Posterior vena cava (tissue), 2 donors: ENCODE measurements at regions of chr1 and their contacts with region 1.

Region 1: DNA sequence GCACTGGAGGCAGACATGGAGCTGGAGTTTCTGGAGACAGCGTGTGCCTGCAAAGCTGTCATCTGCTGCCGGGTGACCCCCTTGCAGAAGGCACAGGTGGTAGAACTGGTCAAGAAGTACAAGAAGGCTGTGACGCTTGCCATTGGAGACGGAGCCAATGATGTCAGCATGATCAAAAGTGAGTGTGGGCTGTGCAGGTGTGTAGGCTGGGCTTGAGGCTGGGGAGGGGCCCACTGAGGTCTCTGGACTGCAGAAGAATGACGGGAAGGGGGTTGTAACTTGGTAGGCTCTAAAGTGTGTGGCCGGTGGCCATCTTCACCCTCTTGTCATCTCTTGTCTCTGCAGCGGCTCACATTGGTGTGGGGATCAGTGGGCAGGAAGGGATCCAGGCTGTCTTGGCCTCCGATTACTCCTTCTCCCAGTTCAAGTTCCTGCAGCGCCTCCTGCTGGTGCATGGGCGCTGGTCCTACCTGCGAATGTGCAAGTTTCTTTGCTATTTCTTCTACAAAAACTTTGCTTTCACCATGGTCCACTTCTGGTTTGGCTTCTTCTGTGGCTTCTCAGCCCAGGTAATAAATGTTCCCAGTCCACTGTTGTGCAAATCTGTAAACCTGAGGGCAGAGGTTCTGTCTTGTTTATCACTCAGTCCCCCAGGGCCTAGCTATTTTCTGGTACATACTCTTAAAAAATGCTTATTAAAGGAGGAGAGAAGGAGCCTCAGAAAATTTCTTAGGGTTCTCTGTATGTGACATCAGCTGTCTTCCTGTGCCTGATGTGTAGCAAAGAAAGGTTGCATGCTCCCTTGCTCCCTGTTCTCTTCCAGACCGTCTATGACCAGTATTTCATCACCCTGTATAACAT is 19.9 kb downstream of the ATP8B2 start:
- DNase-seq: peak; percentile 86

Region 2: GRCh38 chr1:154265586-154265985 is 79.6 kb before region 1 on chr1:
- intact Hi-C with region 1: loop called in 1 of 2 experiments (anchors 5 kb)
- DNase-seq: no peak

Region 3: DNA sequence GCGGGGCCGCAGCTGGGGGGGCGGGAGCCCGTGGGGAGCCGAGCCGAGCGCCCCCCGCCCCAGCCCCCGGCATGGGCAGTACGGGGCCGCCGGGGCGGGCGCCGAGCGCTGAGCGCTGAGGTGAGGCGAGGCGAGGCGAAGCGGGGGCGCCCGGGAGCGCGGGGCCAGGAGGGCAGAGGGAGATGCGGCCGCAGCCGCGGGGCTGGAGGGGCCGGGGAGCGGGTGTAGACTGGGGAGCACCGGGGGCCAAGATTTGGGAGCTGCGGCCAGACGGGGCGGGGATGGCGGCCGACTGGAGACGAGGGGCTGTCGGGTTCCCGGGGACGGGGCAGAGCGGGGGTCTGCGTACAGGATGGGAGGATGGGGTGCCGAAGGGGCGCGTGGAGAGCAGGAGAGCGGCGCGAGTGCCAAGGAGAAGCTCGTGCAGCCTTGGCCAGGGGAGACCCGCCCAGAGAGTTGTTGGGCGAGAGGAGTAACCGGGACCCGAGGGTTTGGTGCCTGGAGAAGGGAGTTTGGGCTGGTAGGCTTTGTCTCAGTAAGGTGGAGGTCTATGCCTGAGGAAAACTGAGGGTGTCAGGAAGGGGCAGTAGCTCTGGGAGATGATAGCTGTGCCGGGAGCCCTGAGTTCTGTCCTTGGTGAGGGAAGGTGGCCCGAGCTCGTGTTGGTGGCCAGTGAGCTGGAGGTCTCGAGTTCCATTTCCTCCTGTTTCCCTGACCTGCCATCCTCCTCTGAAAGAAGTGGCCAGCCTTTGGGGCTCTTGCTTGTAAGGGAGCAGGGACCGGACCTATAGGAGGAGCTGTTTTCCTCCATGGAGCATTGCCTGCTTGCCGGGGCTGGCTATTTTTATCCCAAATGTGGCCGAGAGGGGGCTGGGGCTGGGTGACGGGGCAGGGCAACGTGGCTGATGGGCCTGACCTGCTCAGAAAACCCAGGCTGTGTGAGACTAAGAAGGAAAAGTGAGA is 19.3 kb before region 1 on chr1:
- intact Hi-C with region 1: loop called in 1 of 2 experiments (anchors 1 kb)
- DNase-seq: peak; percentile 93